IMR-90 (cell line): ENCODE measurements at regions of chr2 and their contacts with region 1.

Region 1: GRCh38 chr2:158414538-158414937 is 42.0 kb downstream of the CCDC148 start:
- DNase-seq: peak; percentile 64
- ATAC-seq: peak; percentile 66
- H3K4me3 ChIP-seq: no peak overlapping the region
- H3K27ac ChIP-seq: peak overlapping the region; percentile 34; the same call in 1 of the 2 replicates
- H3K4me1 ChIP-seq: peaks cover 10% of the 10 kb centered on the region; the same call in 1 of the 2 replicates
- H3K27me3 ChIP-seq: no peaks in the 10 kb centered on the region
- CTCF ChIP-seq: no peak
- POLR2A ChIP-seq: no peak
- RAD21 ChIP-seq: no peak

Region 2: DNA sequence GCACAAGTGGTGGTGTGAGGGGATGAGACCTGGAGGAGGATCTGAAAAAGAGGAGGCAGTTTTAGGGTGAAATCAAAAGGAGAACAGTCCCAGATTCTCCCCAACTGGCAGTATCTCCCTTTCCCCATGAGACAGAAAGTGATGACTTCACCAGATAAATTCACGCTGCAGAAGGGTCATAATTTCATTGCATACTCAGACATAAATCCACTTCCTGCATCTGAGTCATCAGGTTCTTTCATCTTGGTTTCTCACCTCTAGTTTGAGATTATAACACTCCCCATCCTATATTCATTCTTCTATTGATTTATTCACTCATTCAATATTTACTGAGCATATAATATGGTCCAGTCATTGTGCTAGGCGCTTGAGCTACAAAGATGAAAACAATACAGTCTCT is 22.7 kb before region 1 on chr2:
- CTCF ChIA-PET with region 1: no interaction called
- POLR2A ChIA-PET with region 1: no interaction called
- dilution Hi-C with region 1: no loop called
- in situ Hi-C with region 1: no loop called
- intact Hi-C with region 1: no loop called
- DNase-seq: peak; percentile 16
- ATAC-seq: no peak
- H3K4me3 ChIP-seq: no peak overlapping the region
- H3K27ac ChIP-seq: no peak overlapping the region
- H3K4me1 ChIP-seq: no peaks in the 10 kb centered on the region
- H3K27me3 ChIP-seq: no peaks in the 10 kb centered on the region; the same call in 1 of the 2 replicates
- CTCF ChIP-seq: no peak
- POLR2A ChIP-seq: no peak
- RAD21 ChIP-seq: no peak

Region 3: DNA sequence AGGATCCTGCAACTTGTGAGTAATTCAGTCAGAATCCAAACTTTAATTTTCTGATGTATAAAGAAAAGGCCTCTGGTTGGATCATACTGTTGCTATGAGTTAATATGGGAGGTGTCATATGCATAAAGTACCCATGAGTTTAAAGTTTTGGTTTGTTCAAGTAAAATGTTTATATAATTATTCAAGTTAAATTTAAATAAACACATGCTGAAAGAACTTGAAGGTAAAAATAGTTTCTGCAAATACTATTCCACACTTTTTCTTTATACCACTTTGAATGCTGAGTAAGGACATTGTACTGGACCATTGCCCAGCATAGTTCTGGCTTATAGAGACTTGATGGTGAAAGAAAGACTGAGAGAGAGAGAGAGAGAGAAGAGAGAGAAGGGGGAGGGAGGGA is 72.9 kb after region 1 on chr2:
- CTCF ChIA-PET with region 1: no interaction called
- POLR2A ChIA-PET with region 1: no interaction called
- dilution Hi-C with region 1: no loop called
- in situ Hi-C with region 1: no loop called
- intact Hi-C with region 1: loop called (anchors 1 kb)
- DNase-seq: peak; percentile 85
- ATAC-seq: peak; percentile 89
- H3K4me3 ChIP-seq: no peak overlapping the region
- H3K27ac ChIP-seq: no peak overlapping the region
- H3K4me1 ChIP-seq: peaks cover 9% of the 10 kb centered on the region
- H3K27me3 ChIP-seq: no peaks in the 10 kb centered on the region
- CTCF ChIP-seq: no peak
- POLR2A ChIP-seq: no peak
- RAD21 ChIP-seq: no peak

Region 4: DNA sequence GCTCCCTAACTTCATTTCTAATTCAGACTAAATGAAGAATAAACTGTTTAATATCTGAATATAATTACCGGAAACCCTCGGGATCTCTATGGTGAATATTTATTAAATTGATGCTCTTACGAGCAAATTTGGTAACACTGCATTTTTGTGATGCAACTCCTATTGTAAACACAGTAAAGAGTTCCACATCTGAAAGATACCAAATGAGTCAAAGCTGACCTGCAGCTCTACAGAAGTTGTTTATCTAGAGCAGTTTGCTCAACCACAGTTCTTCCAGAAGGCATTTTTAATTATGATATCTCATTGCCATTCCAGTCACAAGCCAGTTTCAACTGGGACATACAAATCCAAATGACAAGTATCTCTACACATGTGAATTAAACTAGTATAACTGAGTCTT is 172.0 kb after region 1 on chr2:
- CTCF ChIA-PET with region 1: no interaction called
- POLR2A ChIA-PET with region 1: no interaction called
- dilution Hi-C with region 1: no loop called
- in situ Hi-C with region 1: no loop called
- intact Hi-C with region 1: loop called (anchors 5 kb)
- DNase-seq: peak; percentile 95
- ATAC-seq: peak; percentile 93
- H3K4me3 ChIP-seq: no peak overlapping the region
- H3K27ac ChIP-seq: no peak overlapping the region
- H3K4me1 ChIP-seq: peaks cover 2% of the 10 kb centered on the region; the same call in 1 of the 2 replicates
- H3K27me3 ChIP-seq: no peaks in the 10 kb centered on the region
- CTCF ChIP-seq: no peak
- POLR2A ChIP-seq: no peak
- RAD21 ChIP-seq: no peak

Region 5: DNA sequence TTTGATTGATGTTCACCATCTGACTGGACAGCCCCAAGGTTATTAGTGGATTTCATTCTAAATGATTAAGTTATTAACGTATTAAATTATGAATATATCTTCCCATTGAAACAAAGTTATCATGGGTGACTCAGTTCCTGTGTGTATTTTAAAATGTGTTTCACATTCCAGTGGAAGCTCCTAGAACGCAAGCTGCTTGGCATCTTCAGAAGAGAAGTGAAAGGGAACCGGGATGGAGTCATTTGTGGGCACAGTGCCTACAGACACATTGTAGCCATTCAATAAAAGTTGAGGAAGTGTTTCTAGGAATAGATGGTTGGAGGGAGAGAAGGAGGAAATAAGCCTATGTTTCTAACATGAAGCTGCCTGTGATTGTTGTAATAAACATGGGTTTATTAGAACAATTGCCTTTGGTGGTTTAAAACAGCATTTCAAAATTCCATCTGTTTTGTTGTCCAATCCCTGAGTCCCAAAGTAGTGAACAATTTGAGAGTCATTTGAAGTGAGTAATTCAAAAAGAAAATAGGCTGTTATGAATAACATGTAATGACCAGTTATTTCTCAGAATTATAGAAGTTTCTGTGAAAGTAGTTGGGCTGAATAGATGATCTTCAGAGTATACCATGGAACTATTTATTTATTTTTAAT is 185.7 kb after region 1 on chr2:
- CTCF ChIA-PET with region 1: no interaction called
- POLR2A ChIA-PET with region 1: no interaction called
- dilution Hi-C with region 1: no loop called
- in situ Hi-C with region 1: no loop called
- intact Hi-C with region 1: loop called (anchors 5 kb)
- DNase-seq: peak; percentile 95
- ATAC-seq: peak; percentile 91
- H3K4me3 ChIP-seq: no peak overlapping the region
- H3K27ac ChIP-seq: no peak overlapping the region
- H3K4me1 ChIP-seq: peaks cover 8% of the 10 kb centered on the region
- H3K27me3 ChIP-seq: no peaks in the 10 kb centered on the region
- CTCF ChIP-seq: no peak
- POLR2A ChIP-seq: no peak
- RAD21 ChIP-seq: no peak

Region 6: DNA sequence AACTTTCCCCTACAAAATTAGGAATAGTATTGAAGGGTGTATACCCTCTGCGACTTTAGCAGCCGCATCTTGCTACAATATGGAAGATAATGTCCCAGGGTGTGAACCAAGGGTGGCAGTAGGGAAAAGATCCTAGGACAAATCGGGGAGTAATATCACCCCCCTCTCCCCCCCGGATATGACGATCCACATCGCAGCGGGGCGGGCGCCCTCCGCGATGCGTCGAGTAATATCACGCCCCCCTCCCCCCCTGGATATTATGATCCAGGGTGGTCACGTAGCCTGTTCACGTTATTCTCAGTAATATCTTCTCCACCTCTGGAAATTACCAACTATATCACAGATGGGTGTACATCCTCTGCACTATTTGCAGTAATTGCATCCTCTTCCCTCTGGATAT is 463.5 kb after region 1 on chr2:
- CTCF ChIA-PET with region 1: no interaction called
- POLR2A ChIA-PET with region 1: no interaction called
- dilution Hi-C with region 1: no loop called
- in situ Hi-C with region 1: no loop called
- intact Hi-C with region 1: no loop called
- DNase-seq: no peak
- ATAC-seq: no peak
- H3K4me3 ChIP-seq: no peak overlapping the region
- H3K27ac ChIP-seq: no peak overlapping the region
- H3K4me1 ChIP-seq: no peaks in the 10 kb centered on the region
- H3K27me3 ChIP-seq: peaks cover 6% of the 10 kb centered on the region; the same call in 1 of the 2 replicates
- CTCF ChIP-seq: no peak
- POLR2A ChIP-seq: no peak
- RAD21 ChIP-seq: no peak